HepG2 (cell line): ENCODE measurements at regions of chr20 and their contacts with region 1.

Region 1: DNA sequence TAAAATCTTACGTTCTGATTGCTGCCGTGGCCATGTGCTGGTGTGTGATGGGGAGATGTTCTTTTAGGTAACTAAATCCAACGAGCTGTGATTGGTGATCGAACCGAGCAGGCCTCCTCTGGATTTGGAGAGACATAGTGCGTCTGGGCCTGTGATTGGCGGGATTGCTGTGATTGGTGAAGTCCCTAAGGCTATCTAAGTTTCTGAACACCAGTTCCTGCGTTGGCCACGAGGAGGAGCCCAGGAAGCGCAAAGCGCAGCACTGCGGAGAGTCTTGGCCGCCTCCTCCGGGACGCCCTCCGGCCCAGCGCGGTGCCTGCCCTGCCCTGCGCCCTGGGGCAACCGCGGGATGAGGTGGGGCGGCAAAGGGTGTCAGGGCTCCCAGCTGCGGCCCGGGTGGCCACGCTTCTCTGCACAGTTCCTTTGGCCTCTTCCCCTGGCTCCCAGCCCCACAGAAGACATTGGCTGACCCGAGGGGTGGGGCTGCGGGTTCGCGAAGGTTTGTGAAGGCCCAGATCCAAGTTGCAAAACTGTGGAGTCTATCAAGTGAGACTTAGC is 33.0 kb downstream of the HNF4A start:
- DNase-seq: no peak
- ATAC-seq: peak; percentile 11
- H3K4me3 ChIP-seq: no peak overlapping the region
- H3K27ac ChIP-seq: no peak overlapping the region
- H3K4me1 ChIP-seq: peaks cover 72% of the 10 kb centered on the region
- H3K27me3 ChIP-seq: no peaks in the 10 kb centered on the region
- CTCF ChIP-seq: peak; percentile 75
- EP300 ChIP-seq: 0 out of 4 replicates have a peak, but pooled peaks of 1 of the 2 experiments have one; percentile 3
- POLR2A ChIP-seq: no peak
- RAD21 ChIP-seq: peak; percentile 80

Region 2: GRCh38 chr20:44247586-44248409 is 140.7 kb before region 1 on chr20:
- CTCF ChIA-PET with region 1: interaction called, 4 read pairs
- POLR2A ChIA-PET with region 1: no interaction called
- in situ Hi-C with region 1: no loop called
- intact Hi-C with region 1: loop called (anchors 1 kb)
- DNase-seq: peak; percentile 80
- ATAC-seq: peak; percentile 99
- H3K4me3 ChIP-seq: no peak overlapping the region
- H3K27ac ChIP-seq: no peak overlapping the region
- H3K4me1 ChIP-seq: no peaks in the 10 kb centered on the region
- H3K27me3 ChIP-seq: no peaks in the 10 kb centered on the region; a peak in 2 of 5 replicates
- CTCF ChIP-seq: peak; percentile 87
- EP300 ChIP-seq: peak in 1 of 2 experiments; percentile 64; a peak in 1 of 4 replicates
- POLR2A ChIP-seq: no peak
- RAD21 ChIP-seq: peak; percentile 95

Region 3: DNA sequence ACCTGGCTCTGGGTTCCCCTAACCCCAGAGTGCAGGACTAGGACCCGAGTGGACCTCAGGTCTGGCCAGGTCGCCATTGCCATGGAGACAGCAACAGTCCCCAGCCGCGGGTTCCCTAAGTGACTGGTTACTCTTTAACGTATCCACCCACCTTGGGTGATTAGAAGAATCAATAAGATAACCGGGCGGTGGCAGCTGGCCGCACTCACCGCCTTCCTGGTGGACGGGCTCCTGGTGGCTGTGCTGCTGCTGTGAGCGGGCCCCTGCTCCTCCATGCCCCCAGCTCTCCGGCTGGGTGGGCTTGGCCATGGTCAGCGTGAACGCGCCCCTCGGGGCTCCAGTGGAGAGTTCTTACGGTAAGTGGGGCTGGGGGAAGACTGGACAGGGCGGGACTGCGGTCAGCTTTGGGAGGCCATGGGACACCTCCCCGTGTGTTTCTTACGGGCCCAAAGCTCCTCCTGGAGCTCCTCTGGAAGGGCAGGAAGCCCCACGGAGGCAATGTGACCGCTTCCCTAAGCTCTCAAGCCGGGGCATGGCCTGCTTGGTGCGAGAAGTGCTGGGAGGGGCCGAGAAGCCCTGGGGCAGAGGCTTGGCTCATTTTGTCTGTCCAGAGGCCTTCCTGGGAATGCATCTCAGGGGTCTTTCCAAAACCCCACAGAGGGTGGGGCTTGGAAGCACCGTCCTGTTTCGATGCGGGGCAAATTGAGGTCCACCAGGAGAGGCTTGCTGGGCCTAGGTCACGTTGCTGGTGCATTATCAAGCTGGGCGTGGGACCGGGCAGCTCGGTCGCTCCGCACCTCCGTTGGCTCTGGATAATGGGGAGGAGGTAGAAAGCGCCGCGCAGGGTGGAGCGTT is 32.8 kb before region 1 on chr20 and contains the start of gene HNF4A:
- CTCF ChIA-PET with region 1: no interaction called
- POLR2A ChIA-PET with region 1: interaction called, 38 read pairs
- in situ Hi-C with region 1: no loop called
- intact Hi-C with region 1: loop called (anchors 5 kb)
- DNase-seq: peak; percentile 92
- ATAC-seq: peak; percentile 91
- H3K4me3 ChIP-seq: peak within 1 kb of the TSS; percentile 69 to 95 (median 92)
- H3K27ac ChIP-seq: peak within 1 kb of the TSS; percentile 73
- H3K4me1 ChIP-seq: peaks cover 76% of the 10 kb centered on the region
- H3K27me3 ChIP-seq: no peaks in the 10 kb centered on the region; a peak in 1 of 5 replicates
- CTCF ChIP-seq: peak; percentile 9; the same call in 1 of the 2 replicates
- EP300 ChIP-seq: peak in 1 of 2 experiments; percentile 50; a peak in 1 of 4 replicates
- POLR2A ChIP-seq: peak; percentile 85 to 98
- RAD21 ChIP-seq: peak; percentile 66
- total RNA-seq, gene HNF4A: 169 and 190 TPM in 2 replicates

Region 4: DNA sequence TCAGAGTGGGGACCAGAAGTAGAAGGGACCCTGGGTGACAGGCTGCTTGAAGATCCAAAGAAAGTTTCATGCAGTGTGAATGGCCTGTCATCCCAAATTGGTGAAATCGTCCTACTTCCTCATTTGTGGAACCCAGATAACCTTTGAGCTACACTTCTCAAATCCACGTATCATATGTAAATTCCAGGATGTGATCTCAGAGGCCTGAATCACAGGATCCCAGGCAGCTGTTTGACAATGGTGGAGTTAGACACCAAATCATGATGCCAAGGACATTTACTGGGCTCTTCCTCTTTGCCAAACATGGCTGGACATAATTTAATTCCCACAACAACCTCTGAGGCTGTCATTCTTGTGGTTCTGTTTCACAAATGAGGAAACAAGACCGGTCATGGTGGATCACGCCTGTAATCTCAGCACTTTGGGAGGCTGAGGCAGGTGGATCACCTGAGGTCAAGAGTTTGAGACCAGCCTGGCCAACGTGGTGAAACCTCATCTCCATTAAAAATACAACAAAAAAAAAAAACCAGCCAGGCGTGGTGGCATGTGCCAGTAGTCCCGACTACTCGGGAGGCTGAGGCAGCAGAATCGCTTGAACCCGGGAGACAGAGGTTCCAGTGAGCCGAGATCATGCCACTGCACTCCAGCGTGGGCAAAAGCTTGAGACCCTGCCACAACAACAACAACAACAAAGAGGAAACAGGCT is 47.2 kb after region 1 on chr20:
- CTCF ChIA-PET with region 1: no interaction called
- POLR2A ChIA-PET with region 1: interaction called, 28 read pairs
- in situ Hi-C with region 1: no loop called
- intact Hi-C with region 1: no loop called
- DNase-seq: peak; percentile 90
- ATAC-seq: peak; percentile 1; the same call in 2 of the 3 replicates
- H3K4me3 ChIP-seq: no peak overlapping the region
- H3K27ac ChIP-seq: peak overlapping the region; percentile 33
- H3K4me1 ChIP-seq: peaks cover 89% of the 10 kb centered on the region
- H3K27me3 ChIP-seq: no peaks in the 10 kb centered on the region
- CTCF ChIP-seq: no peak
- EP300 ChIP-seq: no peak
- POLR2A ChIP-seq: no peak
- RAD21 ChIP-seq: no peak

Region 5: DNA sequence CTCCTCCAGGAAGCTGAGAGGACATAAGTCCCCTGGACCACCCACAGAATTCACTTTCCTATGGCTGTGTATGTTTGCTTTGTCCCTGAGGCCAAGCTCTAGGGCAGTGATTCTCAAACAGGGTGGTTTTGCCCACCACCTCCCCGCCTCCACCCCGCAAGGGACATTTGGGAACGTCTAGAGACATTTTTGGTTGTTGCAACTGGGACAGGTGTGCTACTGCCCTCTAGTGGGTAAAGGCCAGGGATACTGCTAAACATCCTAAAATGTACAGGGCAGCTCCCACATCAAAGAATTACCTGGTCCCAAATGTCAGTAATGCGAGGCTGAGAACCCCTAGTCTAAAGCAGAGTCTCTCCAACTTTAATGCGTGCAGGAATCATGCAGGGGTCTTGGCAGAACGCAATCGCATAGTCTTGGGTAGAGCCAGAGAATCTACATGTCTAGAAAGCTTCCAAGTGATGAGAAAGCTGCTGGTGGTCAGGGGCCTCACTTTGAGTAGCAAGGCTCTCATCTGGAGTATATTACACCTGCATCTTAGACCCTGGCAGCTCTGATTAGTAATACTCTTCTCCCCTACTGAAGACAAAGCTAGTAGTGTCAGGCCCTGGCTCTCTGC is 707.3 kb after region 1 on chr20:
- CTCF ChIA-PET with region 1: no interaction called
- POLR2A ChIA-PET with region 1: no interaction called
- in situ Hi-C with region 1: no loop called
- intact Hi-C with region 1: no loop called
- DNase-seq: peak; percentile 69
- ATAC-seq: peak; percentile 60
- H3K4me3 ChIP-seq: no peak overlapping the region
- H3K27ac ChIP-seq: no peak overlapping the region
- H3K4me1 ChIP-seq: peaks cover 7% of the 10 kb centered on the region; the same call in 1 of the 2 replicates
- H3K27me3 ChIP-seq: peaks cover 0 to 22% of the 10 kb centered on the region in 2 experiments; a peak in 4 of 5 replicates
- CTCF ChIP-seq: peak; percentile 85
- EP300 ChIP-seq: no peak
- POLR2A ChIP-seq: no peak
- RAD21 ChIP-seq: peak; percentile 67